ENCODE measurements at regions of chr19 and their contacts with region 1.

Region 1: GRCh38 chr19:37906869-37907734 is at the start of gene SIPA1L3:
- DNase-seq: peak; percentile 79 to 95 (median 93)
- ATAC-seq: peak; percentile 98
- H3K4me3 ChIP-seq: peak within 1 kb of the TSS; percentile 74 to 98
- H3K4me3 Mint-ChIP-seq: peak within 1 kb of the TSS; percentile 92
- H3K27ac ChIP-seq: peak within 1 kb of the TSS; percentile 64 to 68
- H3K27ac Mint-ChIP-seq: peak within 1 kb of the TSS; percentile 90
- H3K4me1 ChIP-seq: peaks cover 20% of the 10 kb centered on the region
- H3K4me1 Mint-ChIP-seq: peaks cover 31% of the 10 kb centered on the region
- H3K27me3 ChIP-seq: no peaks in the 10 kb centered on the region
- H3K27me3 Mint-ChIP-seq: no peaks in the 10 kb centered on the region
- CTCF ChIP-seq: no peak
- total RNA-seq, gene SIPA1L3: 13.5 to 14.6 TPM

Region 2: DNA sequence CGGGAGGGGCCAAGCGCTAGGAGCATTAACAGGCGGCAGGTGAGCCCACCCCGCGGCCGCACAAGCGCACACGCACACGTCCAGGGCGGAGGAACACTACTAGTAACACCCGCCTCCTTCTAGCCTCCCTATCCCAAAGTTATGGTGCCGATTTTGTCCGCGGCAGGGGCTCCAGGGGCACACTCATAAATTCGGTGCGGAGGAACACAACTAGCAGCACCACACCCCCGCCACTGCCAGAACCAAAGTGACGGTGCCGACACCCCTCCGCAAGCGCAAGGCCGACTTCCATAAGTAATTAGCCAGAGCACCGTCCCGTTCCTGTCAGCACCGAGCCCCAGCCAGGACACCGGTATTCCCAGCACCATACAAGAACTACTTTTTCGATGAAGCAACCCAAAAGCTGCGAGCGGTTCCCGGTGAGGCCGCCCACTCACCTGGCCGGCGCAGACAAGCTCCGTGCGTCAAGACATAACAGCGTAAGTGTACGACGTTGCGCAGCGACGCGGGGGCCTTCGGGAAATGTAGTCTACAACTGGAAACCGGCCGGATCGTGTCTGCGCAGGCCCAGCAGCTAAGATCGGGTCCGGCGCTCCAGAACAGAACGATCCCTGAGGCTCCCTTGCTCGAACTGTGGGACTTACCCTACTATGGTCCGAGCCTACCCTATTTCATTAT is 312.7 kb before region 1 on chr19 and contains the starts of genes ZNF540 and ZNF571:
- CTCF ChIA-PET with region 1: no interaction called
- POLR2A ChIA-PET with region 1: no interaction called
- intact Hi-C with region 1: loop called in 1 of 2 experiments (anchors 2 kb)
- DNase-seq: peak; percentile 83 to 96 (median 93)
- ATAC-seq: peak; percentile 93
- H3K4me3 ChIP-seq: peak within 1 kb of the TSS; percentile 66 to 70
- H3K4me3 Mint-ChIP-seq: peak within 1 kb of the TSS; percentile 98
- H3K27ac ChIP-seq: peak within 1 kb of the TSS; percentile 84 to 97
- H3K27ac Mint-ChIP-seq: peak within 1 kb of the TSS; percentile 99
- H3K4me1 ChIP-seq: peaks cover 10% of the 10 kb centered on the region
- H3K4me1 Mint-ChIP-seq: peaks cover 31% of the 10 kb centered on the region
- H3K27me3 ChIP-seq: no peaks in the 10 kb centered on the region
- H3K27me3 Mint-ChIP-seq: no peaks in the 10 kb centered on the region
- CTCF ChIP-seq: no peak
- total RNA-seq, gene ZNF540: 17.8 to 20.1 TPM
- total RNA-seq, gene ZNF571: 30.5 to 30.8 TPM

Region 3: DNA sequence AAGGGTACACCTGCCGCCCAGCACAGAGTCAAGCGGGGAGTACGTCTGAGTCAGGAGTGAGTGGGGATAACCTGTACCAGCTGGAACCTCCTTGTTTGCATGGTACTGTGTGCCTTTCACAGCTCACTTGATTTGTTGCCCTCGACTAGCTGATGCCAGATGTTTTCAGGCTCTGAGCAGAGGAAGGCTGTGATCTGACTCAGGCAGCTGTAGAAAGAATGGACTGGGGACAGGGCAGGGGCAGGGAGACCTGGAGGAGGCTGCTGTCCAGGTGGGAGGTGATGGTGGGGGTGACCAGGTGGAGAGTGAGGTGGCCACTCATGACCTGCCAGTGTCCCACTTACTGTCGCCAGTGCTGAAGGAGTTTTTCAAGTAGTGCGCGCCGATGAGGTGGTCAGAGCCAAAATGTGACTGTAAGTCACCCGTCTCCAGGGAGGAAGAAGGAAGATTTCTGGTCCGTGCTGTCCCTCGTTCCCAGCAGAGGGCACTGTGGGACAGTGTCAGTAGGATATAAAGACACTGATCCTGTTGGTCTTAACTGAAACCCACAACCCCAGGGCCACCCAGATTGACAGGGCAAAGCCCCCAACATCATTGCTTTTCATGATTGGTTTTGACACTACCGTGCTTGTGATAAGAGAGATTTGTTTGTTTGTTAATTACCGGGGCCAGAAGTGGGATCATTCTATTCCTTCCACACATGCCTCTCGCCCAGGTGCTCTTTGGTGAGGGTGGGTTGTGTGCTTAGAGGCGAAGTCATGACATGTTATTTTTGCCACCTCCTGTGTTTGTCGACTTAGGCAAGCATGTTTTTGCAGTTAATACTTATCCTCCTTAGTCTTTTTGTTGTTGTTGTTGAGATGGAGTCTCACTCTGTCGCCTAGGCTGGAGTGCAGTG is 188.6 kb after region 1 on chr19:
- CTCF ChIA-PET with region 1: interaction called, 15 read pairs
- POLR2A ChIA-PET with region 1: no interaction called
- intact Hi-C with region 1: loop called in 1 of 2 experiments (anchors 1 kb)
- DNase-seq: peak in 8 of 9 experiments; percentile 34 to 69 (median 50)
- ATAC-seq: peak; percentile 44
- H3K4me3 ChIP-seq: no peak overlapping the region
- H3K4me3 Mint-ChIP-seq: no peak overlapping the region
- H3K27ac ChIP-seq: no peak overlapping the region
- H3K27ac Mint-ChIP-seq: peak overlapping the region; percentile 15
- H3K4me1 ChIP-seq: no peaks in the 10 kb centered on the region
- H3K4me1 Mint-ChIP-seq: peaks cover 5% of the 10 kb centered on the region
- H3K27me3 ChIP-seq: no peaks in the 10 kb centered on the region
- H3K27me3 Mint-ChIP-seq: no peaks in the 10 kb centered on the region
- CTCF ChIP-seq: peak; percentile 46

Region 4: DNA sequence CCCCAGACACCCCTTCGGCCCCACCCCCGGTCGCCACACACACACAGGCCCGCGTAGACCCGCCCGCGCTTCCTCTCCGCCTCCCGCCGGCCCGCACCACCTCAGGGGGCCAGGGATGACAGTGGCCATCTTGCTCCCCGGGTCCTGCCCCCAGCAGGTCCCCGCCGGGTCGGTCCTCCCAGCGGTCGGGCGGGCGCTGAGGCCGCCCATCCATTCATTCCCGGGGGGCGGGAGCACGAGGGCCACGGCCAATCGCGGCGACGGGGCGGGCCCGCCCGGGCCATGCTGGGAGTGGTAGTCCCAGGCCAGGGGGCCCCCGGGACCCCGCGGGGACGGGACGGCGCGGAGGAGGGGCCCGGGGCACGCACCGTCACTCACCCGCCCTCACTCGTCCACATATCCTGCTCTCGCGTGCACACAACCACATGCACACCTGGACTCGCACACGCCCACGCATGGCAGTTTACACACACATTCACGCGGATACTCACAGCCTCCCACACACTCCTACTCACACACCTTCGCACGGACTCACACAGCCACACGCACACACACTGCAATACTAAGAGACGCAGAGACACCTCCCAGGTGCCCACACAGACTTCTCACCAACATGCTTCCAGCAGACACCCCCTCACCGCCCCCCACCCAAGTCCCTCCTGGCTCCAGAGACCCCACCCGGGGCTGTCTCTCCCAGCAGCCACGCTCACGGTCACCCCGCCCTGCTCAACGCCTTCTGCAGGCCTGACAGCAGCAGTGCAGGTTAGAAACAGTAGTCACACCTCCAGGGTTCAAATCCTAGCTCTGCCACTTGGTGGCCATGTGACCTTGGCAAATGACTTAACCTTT is 317.1 kb after region 1 on chr19 and contains the start of gene DPF1:
- CTCF ChIA-PET with region 1: interaction called, 4 read pairs
- POLR2A ChIA-PET with region 1: no interaction called
- intact Hi-C with region 1: loop called (anchors 1 to 5 kb)
- DNase-seq: peak in 5 of 9 experiments; percentile 29 to 60 (median 41)
- ATAC-seq: peak; percentile 75
- H3K4me3 ChIP-seq: peak within 1 kb of the TSS; percentile 3 to 12
- H3K4me3 Mint-ChIP-seq: peak within 1 kb of the TSS; percentile 80
- H3K27ac ChIP-seq: no peak within 1 kb of the TSS
- H3K27ac Mint-ChIP-seq: no peak within 1 kb of the TSS
- H3K4me1 ChIP-seq: peaks cover 19% of the 10 kb centered on the region
- H3K4me1 Mint-ChIP-seq: peaks cover 26% of the 10 kb centered on the region
- H3K27me3 ChIP-seq: peaks cover 35 to 61% of the 10 kb centered on the region in 2 experiments
- H3K27me3 Mint-ChIP-seq: peaks cover 55% of the 10 kb centered on the region
- CTCF ChIP-seq: peak; percentile 27
- total RNA-seq, gene DPF1: not detected

Region 5: GRCh38 chr19:38315657-38316476 is 408.8 kb after region 1 on chr19 and contains the start of gene YIF1B:
- CTCF ChIA-PET with region 1: interaction called, 3 read pairs
- POLR2A ChIA-PET with region 1: no interaction called
- intact Hi-C with region 1: loop called in 1 of 2 experiments (anchors 1 kb)
- DNase-seq: peak; percentile 91 to 98 (median 94)
- ATAC-seq: peak; percentile 92
- H3K4me3 ChIP-seq: peak within 1 kb of the TSS; percentile 60 to 68
- H3K4me3 Mint-ChIP-seq: peak within 1 kb of the TSS; percentile 86
- H3K27ac ChIP-seq: peak within 1 kb of the TSS; percentile 93 to 95
- H3K27ac Mint-ChIP-seq: peak within 1 kb of the TSS; percentile 95
- H3K4me1 ChIP-seq: peaks cover 34% of the 10 kb centered on the region
- H3K4me1 Mint-ChIP-seq: peaks cover 52% of the 10 kb centered on the region
- H3K27me3 ChIP-seq: peaks cover 0 to 2% of the 10 kb centered on the region in 2 experiments
- H3K27me3 Mint-ChIP-seq: no peaks in the 10 kb centered on the region
- CTCF ChIP-seq: no peak
- total RNA-seq, gene YIF1B: 12.0 to 13.0 TPM

Region 6: DNA sequence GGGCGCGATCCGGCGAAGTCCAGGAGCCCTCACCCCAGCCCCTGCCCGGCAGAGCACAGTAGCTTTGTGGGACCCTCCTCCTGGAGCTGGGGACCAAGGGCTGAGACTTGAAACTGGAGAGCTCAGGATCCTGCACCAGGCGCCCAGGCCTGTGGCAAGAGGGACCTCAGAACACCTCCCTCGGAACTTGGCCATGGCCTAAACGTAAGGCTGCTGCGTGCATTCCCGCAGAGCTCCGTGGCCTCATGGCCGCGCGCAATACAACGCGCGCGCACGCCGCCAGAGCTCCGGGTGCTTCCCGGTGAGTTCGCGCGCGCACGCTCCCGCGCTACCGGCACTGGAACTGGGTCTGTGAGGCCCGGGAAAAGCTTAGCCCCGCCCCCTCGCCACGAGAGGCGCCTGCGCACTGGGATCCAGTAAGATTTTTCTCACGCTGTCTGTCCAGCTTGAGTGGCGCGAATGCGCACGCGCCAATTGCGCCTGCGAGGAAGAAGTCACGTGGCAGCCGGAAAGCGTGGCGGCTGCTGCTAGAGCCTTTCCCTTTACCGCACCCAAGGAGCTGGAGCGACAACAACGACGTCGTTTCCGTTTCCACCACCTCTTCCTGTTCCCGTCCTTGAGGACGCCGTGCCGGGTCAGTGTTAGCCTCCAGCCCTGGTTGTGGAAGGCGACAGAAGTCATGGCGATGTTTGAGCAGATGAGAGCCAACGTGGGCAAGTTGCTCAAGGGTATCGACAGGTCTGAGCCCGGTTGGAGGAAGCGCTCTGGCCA is 711.7 kb after region 1 on chr19 and contains the start of gene EIF3K:
- CTCF ChIA-PET with region 1: no interaction called
- POLR2A ChIA-PET with region 1: no interaction called
- intact Hi-C with region 1: loop called in 1 of 2 experiments (anchors 5 kb)
- DNase-seq: peak; percentile 86 to 100 (median 97)
- ATAC-seq: peak; percentile 68
- H3K4me3 ChIP-seq: peak within 1 kb of the TSS; percentile 84 to 85
- H3K4me3 Mint-ChIP-seq: peak within 1 kb of the TSS; percentile 99
- H3K27ac ChIP-seq: peak within 1 kb of the TSS; percentile 89 to 96
- H3K27ac Mint-ChIP-seq: peak within 1 kb of the TSS; percentile 98
- H3K4me1 ChIP-seq: peaks cover 38% of the 10 kb centered on the region
- H3K4me1 Mint-ChIP-seq: peaks cover 49% of the 10 kb centered on the region
- H3K27me3 ChIP-seq: no peaks in the 10 kb centered on the region
- H3K27me3 Mint-ChIP-seq: no peaks in the 10 kb centered on the region
- CTCF ChIP-seq: no peak
- total RNA-seq, gene EIF3K: 313 to 315 TPM